Head of caudate nucleus (tissue), 42 donors: ENCODE measurements at regions of chr15 and their contacts with region 1.

Region 1: GRCh38 chr15:67542420-67543347 is at the start of gene MAP2K5:
- DNase-seq: peak; percentile 73 to 96 (median 92)

Region 2: DNA sequence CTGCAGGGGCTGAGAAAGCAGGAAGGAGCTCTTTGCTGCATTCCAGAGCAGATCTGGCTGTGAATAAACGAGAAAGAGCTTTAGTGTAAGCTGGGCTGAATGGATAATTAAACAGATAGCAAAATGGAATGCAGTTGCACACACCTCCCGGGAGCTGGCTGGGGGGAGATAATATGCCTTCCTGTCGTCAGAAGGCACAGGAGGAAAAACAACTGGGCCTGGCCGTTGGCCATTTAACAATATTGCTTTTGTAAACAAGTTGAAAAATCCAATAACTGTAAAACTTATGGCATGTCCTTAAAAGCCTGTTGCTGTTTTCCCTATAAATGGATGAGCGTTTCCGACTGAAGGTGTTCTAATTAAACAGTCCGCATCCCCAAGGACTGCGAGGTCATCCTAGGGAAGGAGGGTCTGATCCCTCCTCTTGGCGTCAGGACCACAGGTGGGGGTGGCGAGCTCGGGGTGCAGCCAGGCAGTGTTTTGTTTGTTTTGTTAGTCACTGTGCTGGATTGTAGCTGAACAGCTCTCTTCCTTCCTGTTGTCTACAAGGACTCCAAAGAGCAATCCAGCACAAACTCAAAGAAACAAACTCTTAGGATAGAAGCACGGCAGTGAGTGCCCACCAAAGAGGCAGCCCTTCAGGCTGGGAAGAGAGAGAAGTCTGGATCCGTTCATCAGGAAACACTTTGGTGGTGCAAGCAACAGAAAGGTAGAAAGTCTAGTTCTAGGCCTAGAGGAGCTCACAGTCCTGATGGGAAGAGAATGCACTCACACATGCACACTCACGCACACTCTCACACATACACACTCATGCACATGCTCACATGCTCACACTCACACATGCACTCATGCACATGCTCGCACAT is 610.7 kb before region 1 on chr15:
- intact Hi-C with region 1: no loop called
- DNase-seq: peak in 1 of 42 donors; percentile 3

Region 3: DNA sequence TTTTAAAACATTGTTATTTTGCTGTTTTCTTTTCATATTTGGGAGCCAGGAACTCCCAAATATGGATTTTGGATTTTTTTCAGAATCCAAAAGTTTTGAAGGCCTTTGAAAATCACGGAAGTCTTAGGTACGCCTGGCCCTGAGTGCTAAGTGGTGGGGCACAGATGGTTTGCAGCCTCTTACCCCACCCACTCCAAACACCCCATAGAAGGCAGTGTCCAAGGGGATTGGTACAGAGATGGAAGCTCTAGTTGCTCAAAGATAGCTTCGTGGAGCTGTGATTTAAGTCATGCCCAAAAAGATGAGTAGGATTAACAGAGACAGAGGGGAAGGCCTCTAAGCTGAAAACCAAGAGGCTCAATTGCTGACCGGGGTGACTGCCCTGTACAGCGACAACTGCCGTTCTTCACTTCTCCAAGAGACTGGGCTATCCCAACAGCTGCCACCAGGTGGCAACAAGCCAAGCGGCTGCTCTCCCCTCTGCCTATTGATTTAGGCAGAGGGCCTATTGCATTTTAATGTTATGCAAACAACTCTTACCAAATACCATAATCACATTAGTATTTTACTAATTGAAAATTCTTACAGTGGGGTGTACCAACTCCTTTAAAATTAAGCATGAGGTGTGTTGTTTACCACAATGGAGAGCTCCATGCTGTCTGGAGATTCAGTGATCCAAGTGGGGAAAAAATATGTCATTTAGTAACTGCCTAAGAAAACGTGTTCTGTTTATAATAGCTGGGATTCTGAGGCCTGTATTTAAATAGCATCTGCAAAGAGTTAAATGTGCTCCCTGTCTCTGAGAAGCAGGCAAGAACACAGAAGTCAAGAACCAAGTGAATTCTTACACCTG is 85.8 kb before region 1 on chr15:
- intact Hi-C with region 1: loop called (anchors 10 kb)
- DNase-seq: peak; percentile 73 to 96 (median 88)

Region 4: DNA sequence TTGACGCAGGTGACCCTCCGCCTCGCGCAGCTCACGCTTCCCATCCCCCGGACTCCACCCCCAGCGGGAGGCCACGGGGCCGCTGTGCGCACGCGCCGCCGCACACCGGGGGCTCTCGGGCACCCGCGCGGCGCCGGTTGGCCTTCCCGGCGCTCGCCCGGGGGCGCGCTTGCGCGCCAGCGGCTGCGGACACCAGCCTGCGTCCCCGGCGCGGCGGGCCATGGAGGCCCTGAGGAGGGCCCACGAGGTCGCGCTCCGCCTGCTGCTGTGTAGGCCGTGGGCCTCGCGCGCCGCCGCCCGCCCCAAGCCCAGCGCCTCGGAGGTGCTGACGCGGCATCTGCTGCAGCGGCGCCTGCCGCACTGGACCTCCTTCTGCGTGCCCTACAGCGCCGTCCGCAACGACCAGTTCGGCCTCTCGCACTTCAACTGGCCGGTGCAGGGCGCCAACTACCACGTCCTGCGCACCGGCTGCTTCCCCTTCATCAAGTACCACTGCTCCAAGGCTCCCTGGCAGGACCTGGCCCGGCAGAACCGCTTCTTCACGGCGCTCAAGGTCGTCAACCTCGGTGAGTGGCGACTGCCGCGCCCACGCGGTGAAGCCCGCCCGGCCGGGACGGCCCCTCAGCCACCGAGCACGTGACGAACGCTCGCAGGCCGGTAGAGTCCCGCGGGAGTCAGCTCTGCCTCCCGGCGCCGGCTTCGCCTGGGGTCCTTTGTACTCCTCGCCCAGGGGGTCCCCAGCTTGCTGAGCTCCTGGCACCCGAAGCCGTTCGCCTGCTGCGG is 21.5 kb before region 1 on chr15 and contains the start of gene C15orf61:
- intact Hi-C with region 1: loop called (anchors 2 kb)
- DNase-seq: peak; percentile 57 to 93 (median 86)